Panc1 (cell line): ENCODE measurements at regions of chrX and their contacts with region 1.

Region 1: DNA sequence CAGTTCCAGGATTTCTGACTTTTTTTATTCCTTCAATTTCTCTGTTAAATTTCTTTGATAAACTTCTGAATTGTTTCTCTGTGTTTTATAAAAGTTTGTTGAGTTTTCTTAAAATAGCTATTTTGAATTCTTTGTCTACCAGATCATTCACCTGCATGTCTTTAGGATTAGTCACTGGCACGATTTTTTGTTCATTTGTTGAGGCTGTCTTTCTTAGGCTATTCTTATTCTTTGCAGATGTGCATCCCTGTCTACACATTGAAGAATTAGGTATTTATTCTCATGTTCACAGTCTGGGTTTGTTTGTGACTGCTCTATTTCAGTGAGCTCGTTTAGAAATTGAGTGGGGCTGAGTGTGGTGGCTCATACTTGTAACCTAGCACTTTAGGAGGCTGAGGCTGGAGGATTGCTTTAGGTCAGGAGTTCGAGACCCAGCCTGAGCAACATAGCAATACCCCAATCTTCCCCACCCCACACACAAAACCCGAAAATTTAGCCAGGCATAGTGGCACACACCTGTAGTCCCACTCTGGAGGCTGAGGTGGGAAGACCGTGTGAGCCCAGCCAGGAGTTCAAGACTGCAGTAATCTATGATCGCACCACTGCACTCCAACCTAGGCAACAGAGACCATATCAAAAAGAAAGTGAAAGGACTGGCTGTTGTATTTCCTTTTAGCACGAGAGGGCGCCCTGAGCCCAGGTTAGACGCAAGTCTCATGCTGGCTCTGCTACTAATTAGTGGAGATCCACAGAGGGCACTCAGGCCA is 42.0 kb downstream of the F8 start:
- DNase-seq: peak; percentile 58
- ATAC-seq: peak; percentile 97
- H3K4me3 ChIP-seq: peak overlapping the region; percentile 36 to 67
- H3K27ac ChIP-seq: peak overlapping the region; percentile 77
- H3K4me1 ChIP-seq: peaks cover 4% of the 10 kb centered on the region; the same call in 1 of the 2 replicates
- H3K27me3 ChIP-seq: no peaks in the 10 kb centered on the region
- CTCF ChIP-seq: peak; percentile 86

Region 2: GRCh38 chrX:154918060-154918483 is 62.4 kb before region 1 on chrX:
- CTCF ChIA-PET with region 1: interaction called, 7 read pairs
- POLR2A ChIA-PET with region 1: no interaction called
- in situ Hi-C with region 1: no loop called
- intact Hi-C with region 1: loop called (anchors 2 kb)
- DNase-seq: peak; percentile 61
- ATAC-seq: peak; percentile 95
- H3K4me3 ChIP-seq: peak overlapping the region; percentile 33 to 55
- H3K27ac ChIP-seq: 0 out of 2 replicates have a peak overlapping the region, but pooled peaks have one; percentile 44
- H3K4me1 ChIP-seq: no peaks in the 10 kb centered on the region
- H3K27me3 ChIP-seq: no peaks in the 10 kb centered on the region
- CTCF ChIP-seq: peak; percentile 80

Region 3: GRCh38 chrX:155148724-155149537 is 168.4 kb after region 1 on chrX:
- CTCF ChIA-PET with region 1: no interaction called
- POLR2A ChIA-PET with region 1: no interaction called
- in situ Hi-C with region 1: no loop called
- intact Hi-C with region 1: loop called (anchors 10 kb)
- DNase-seq: no peak
- ATAC-seq: peak; percentile 75; the same call in 1 of the 2 replicates
- H3K4me3 ChIP-seq: no peak overlapping the region
- H3K27ac ChIP-seq: no peak overlapping the region
- H3K4me1 ChIP-seq: no peaks in the 10 kb centered on the region
- H3K27me3 ChIP-seq: no peaks in the 10 kb centered on the region
- CTCF ChIP-seq: peak; percentile 76

Region 4: DNA sequence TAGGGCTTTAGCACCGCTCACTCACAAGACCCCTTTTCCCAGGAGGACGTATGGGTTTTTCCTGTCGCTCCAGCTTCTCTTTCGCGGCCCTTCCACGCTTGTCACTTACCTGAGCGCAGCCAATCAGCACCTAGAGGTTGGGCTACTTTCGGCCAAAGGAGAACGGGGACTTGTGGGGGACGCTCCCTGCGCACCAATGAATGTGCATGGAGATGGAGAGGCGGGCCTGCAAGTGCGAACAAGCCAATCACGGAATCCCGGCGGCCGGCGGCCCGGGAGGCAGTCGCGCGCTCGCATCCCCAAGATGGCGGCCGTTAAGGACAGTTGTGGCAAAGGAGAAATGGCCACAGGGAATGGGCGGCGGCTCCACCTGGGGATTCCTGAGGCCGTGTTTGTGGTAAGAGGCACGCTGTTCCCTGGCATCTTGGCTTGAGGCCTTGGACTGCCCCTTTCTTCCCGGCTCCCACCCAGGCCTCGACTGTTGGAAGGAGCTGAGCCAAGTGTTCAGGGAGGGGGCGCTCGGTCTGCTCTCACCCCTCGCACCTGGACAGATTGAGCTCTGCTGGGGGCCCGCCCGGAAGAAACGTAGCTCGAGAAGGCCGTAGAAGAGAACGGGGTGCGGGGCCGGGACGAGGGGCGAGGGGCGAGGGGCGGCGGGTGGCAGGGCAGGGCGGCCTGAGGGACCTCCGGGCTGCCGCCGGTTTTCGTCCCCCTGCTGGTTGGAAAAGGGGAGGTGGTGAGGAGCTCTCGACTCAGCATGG is 235.8 kb after region 1 on chrX and contains the start of gene VBP1:
- CTCF ChIA-PET with region 1: no interaction called
- POLR2A ChIA-PET with region 1: no interaction called
- in situ Hi-C with region 1: no loop called
- intact Hi-C with region 1: loop called (anchors 10 kb)
- DNase-seq: peak; percentile 88
- ATAC-seq: peak; percentile 99
- H3K4me3 ChIP-seq: peak within 1 kb of the TSS; percentile 94 to 100
- H3K27ac ChIP-seq: peak within 1 kb of the TSS; percentile 83
- H3K4me1 ChIP-seq: peaks cover 21% of the 10 kb centered on the region
- H3K27me3 ChIP-seq: no peaks in the 10 kb centered on the region
- CTCF ChIP-seq: peak; percentile 74
- total RNA-seq, gene VBP1: 126 TPM